ENCODE measurements at regions of chr2 and their contacts with region 1.

Region 1: GRCh38 chr2:201059961-201060755 is 11.3 kb downstream of the HYCC2 start:
- DNase-seq: no peak
- ATAC-seq: no peak
- H3K4me3 ChIP-seq: no peak overlapping the region
- H3K4me1 ChIP-seq: peaks cover 17% of the 10 kb centered on the region
- CTCF ChIP-seq: no peak

Region 2: GRCh38 chr2:200901459-200902072 is 158.6 kb before region 1 on chr2:
- intact Hi-C with region 1: loop called in 1 of 2 experiments (anchors 10 kb)
- DNase-seq: peak in 1 of 3 donors; percentile 88
- ATAC-seq: peak; percentile 95
- H3K4me3 ChIP-seq: no peak overlapping the region
- H3K4me1 ChIP-seq: no peaks in the 10 kb centered on the region
- CTCF ChIP-seq: peak; percentile 48

Region 3: DNA sequence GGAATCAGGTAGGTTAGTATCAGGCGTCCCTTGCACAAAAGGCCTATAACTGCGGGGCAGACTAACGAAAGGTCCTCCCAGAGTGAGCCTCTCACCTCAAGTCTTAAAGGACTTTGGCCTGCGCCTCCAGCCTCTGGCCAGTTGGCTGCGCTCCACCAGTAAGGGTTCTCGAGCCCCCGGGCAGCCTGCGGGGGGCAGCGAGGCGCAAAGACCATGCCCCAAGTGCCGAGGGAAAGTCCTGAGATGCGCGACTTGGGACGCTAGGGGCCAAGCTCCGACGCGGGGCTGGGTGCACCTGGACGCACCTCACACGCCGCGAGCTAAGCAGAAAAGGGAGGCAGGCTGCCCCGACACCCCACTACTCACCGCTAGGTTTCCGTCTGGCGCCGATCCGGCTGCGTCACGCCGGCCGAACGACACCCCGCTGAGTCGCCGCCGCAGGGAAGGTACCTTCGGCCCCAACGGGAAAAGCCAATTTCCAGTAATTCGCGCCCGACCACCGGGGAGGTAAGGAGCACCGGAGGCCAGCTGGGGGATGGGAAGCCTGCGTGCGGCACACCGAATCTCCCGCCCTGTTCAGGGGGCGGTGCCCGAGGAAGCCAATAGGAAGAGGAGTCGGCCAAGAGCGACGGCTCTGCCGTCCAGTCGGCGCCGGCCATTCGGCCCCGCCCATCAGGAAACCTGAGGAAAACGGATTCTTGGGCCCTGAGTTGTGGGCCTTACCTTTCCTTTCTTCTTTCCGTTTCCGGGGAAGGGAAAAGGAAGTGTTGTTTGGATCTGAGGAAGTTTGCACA is 96.8 kb before region 1 on chr2 and contains the start of gene ORC2:
- intact Hi-C with region 1: loop called in 1 of 2 experiments (anchors 5 kb)
- DNase-seq: peak; percentile 95 to 97 (median 97)
- ATAC-seq: peak; percentile 95
- H3K4me3 ChIP-seq: peak within 1 kb of the TSS; percentile 74
- H3K4me1 ChIP-seq: peaks cover 27% of the 10 kb centered on the region
- CTCF ChIP-seq: peak; percentile 62
- total RNA-seq, gene ORC2: 29.6 to 51.1 (median 32.2) TPM